PC-3 (cell line): ENCODE measurements at regions of chr18 and their contacts with region 1.

Region 1: DNA sequence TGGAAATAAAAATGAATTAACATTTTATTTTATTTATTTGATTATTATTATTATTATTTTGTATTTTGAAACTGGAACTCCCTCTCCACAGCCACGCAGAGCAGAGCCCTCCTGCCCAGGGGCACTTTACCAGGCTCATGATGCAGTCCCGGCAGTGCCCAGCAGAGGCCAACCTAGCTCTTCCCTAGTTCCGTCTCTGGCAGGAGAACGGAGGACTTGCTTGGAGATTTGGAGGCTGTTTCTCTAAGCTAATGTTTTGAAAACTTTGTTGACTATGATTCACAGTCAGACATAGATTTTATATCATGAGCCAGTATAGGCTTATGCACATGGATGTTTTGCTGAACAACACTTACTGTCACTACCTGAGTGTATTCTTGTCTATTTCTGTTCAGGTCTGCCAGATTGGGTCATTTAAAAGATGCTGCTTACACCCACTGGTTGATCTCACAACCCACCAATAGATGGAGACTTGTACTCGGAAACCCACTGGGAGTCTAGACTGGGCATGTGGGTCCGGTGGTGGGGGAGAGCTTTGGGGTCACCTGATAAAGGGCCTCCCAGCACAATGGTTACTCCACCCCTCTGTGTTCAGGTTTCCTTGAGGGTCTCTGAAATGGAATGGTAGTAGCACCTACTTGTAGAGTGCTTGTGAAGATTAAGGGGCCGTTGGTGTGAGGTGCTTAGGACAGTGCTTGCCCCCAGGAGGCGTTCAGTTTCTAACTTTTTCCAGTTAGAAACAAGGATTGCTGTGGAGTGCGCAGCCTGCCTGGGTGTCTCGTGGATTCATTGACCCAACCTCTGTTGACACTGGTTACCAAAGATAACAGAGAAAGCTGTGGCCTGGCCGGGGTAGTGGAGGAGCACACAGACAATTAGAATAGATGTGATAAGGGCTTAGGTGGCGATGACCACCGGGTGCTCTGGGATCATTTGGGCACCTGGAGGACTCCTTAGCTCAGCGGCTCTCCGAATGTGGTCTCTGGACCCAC is 177.3 kb downstream of the HAUS1 start:
- DNase-seq: peak; percentile 71
- ATAC-seq: peak; percentile 84
- H3K4me3 ChIP-seq: no peak overlapping the region
- H3K27ac ChIP-seq: no peak overlapping the region
- H3K4me1 ChIP-seq: no peaks in the 10 kb centered on the region
- H3K27me3 ChIP-seq: no peaks in the 10 kb centered on the region
- CTCF ChIP-seq: peak; percentile 64

Region 2: DNA sequence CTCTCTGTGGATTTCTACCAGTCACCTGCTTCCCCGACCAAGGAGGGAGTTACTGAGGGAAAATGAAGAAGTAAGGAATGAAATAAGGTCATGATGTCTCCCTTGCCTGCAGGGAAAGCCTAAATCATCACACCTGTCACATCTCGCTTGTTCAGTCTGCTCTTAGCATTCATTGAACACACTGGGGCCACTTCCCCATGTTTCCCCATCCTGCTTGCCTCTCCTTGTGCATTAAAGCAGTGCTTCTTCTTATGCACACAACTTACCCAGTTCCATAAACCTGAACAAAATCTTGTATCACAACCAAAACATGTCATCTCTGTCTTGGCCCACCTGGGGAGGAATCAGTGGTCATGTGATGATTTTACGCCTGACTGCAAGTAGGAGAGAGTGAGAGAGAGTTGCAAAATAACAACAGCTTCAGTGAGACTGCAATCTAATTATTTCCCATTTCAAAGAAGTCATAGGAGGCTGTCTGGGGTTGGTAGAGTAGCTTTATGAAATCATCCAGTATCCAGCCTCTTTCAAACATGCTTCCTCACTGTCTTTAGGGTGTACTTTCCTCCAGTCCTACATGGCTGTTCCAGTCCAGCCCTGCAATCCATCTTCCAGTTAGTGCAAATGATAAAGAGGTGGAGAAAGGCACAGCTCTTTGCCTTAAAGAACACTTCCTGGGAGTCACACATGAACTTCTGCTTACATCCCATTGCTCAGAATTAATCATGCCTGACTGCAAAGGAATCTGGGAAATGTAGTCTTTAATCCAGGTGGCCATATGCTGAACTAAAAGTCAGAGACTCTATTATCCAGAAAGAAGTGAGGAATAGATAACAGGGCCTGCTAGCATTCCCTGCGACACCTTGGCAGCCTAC is 42.8 kb after region 1 on chr18:
- CTCF ChIA-PET with region 1: interaction called, 4 read pairs
- POLR2A ChIA-PET with region 1: no interaction called
- intact Hi-C with region 1: loop called (anchors 2 kb)
- DNase-seq: peak; percentile 61
- ATAC-seq: peak; percentile 27
- H3K4me3 ChIP-seq: no peak overlapping the region
- H3K27ac ChIP-seq: peak overlapping the region; percentile 22; the same call in 1 of the 2 replicates
- H3K4me1 ChIP-seq: peaks cover 51% of the 10 kb centered on the region
- H3K27me3 ChIP-seq: no peaks in the 10 kb centered on the region
- CTCF ChIP-seq: no peak

Region 3: GRCh38 chr18:46343931-46344372 is 62.5 kb after region 1 on chr18:
- CTCF ChIA-PET with region 1: interaction called, 10 read pairs
- POLR2A ChIA-PET with region 1: no interaction called
- intact Hi-C with region 1: loop called (anchors 5 kb)
- DNase-seq: peak; percentile 46
- ATAC-seq: peak; percentile 79
- H3K4me3 ChIP-seq: no peak overlapping the region
- H3K27ac ChIP-seq: no peak overlapping the region
- H3K4me1 ChIP-seq: peaks cover 5% of the 10 kb centered on the region
- H3K27me3 ChIP-seq: no peaks in the 10 kb centered on the region
- CTCF ChIP-seq: no peak

Region 4: DNA sequence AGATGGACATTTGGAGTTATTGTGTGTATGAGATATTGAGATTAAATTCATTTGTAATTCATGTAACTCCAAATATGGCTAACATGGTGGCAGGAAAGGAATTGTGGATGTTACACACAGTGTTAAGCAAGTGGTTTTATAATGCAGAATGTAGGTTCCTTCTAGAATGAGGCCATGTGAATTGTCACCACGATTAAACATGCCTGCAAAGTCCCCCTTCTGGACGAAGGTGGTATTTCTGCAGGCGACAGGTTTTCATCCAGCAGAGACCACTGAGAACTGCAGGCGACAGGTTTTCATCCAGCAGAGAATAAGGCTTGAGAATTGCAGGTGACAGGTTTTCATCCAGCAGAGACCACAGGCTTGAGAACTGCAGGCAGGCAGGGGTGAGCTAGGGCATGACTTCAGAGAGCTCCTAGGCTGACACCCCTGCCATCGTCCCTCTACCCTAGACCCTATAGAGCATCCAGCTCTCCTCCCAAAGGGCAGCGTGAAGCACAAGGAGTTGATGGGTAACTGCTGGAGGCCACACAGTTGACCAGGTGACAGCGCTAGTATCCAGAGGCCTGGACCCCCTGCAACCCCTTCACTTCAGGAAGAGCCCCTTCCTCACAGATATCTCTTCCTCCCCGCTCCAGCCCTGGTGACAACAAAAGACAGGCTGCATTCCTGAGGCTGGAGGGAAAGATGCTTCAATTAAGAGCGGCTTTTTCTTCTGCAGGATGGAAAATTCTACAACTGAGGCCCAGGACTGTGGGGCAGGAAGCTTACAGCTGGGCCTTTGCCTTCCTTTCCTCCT is 199.8 kb after region 1 on chr18:
- CTCF ChIA-PET with region 1: no interaction called
- POLR2A ChIA-PET with region 1: no interaction called
- intact Hi-C with region 1: loop called (anchors 1 kb)
- DNase-seq: peak; percentile 44
- ATAC-seq: peak; percentile 38; the same call in 1 of the 2 replicates
- H3K4me3 ChIP-seq: no peak overlapping the region
- H3K27ac ChIP-seq: no peak overlapping the region
- H3K4me1 ChIP-seq: peaks cover 9% of the 10 kb centered on the region; the same call in 1 of the 2 replicates
- H3K27me3 ChIP-seq: no peaks in the 10 kb centered on the region
- CTCF ChIP-seq: peak; percentile 55

Region 5: GRCh38 chr18:46622999-46623398 is 341.5 kb after region 1 on chr18:
- CTCF ChIA-PET with region 1: interaction called, 3 read pairs
- POLR2A ChIA-PET with region 1: no interaction called
- intact Hi-C with region 1: loop called (anchors 1 kb)
- DNase-seq: peak; percentile 25
- ATAC-seq: peak; percentile 61
- H3K4me3 ChIP-seq: no peak overlapping the region
- H3K27ac ChIP-seq: no peak overlapping the region
- H3K4me1 ChIP-seq: no peaks in the 10 kb centered on the region
- H3K27me3 ChIP-seq: no peaks in the 10 kb centered on the region
- CTCF ChIP-seq: peak; percentile 30; the same call in 1 of the 2 replicates